Dorsolateral prefrontal cortex (tissue), 120 donors: ENCODE measurements at regions of chr6 and their contacts with region 1.

Region 1: GRCh38 chr6:108904741-108905140 is 56.5 kb downstream of the ARMC2 start:
- DNase-seq: no peak
- H3K4me3 ChIP-seq: peak overlapping the region in 1 of 59 donors; percentile 2
- H3K27ac ChIP-seq: peak overlapping the region in 33 of 59 donors; percentile 2 to 76 (median 34)
- H3K27me3 ChIP-seq: no peaks in the 10 kb centered on the region
- CTCF ChIP-seq: no peak

Region 2: GRCh38 chr6:108988296-108988695 is 83.6 kb after region 1 on chr6:
- intact Hi-C with region 1: no loop called
- DNase-seq: no peak
- H3K4me3 ChIP-seq: no peak overlapping the region
- H3K27ac ChIP-seq: peak overlapping the region in 3 of 59 donors; percentile 10 to 53 (median 13)
- H3K27me3 ChIP-seq: no peaks in the 10 kb centered on the region
- CTCF ChIP-seq: no peak

Region 3: GRCh38 chr6:109073344-109074132 is 168.8 kb after region 1 on chr6:
- intact Hi-C with region 1: loop called in 1 of 2 experiments (anchors 5 kb)
- DNase-seq: peak in 2 of 10 donors; percentile 45 to 48
- H3K4me3 ChIP-seq: peak overlapping the region in 8 of 59 donors; percentile 3 to 30 (median 6)
- H3K27ac ChIP-seq: peak overlapping the region in 1 of 59 donors; percentile 39
- H3K27me3 ChIP-seq: no peaks in the 10 kb centered on the region
- CTCF ChIP-seq: peak; percentile 60 to 91 (median 75)